ENCODE measurements at regions of chr2 and their contacts with region 1.

Region 1: DNA sequence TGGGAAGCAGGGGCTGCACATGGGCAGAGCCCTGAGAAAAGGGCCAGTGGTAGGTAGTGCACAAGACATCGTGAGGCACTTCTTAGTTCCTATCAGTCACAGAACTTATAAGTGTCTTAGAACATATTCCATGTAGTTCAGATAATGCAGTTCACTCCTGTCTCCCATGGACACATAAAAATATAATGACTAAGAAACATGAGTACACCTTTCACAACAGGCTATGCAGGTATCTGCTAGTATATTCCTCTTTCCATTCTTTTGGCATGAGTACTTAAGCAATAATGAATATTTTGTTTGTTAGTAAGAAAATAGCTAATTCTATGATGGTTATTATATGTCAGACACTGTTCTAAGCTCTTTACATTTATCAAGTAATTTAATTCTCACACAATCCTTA is 808.4 kb downstream of the BCL11A start:
- DNase-seq: no peak
- ATAC-seq: no peak
- H3K4me3 Mint-ChIP-seq: no peak overlapping the region
- H3K27ac Mint-ChIP-seq: no peak overlapping the region
- H3K4me1 Mint-ChIP-seq: no peaks in the 10 kb centered on the region
- H3K27me3 Mint-ChIP-seq: no peaks in the 10 kb centered on the region
- CTCF ChIP-seq: no peak

Region 2: GRCh38 chr2:59726228-59727120 is 18.6 kb before region 1 on chr2:
- CTCF ChIA-PET with region 1: no interaction called
- POLR2A ChIA-PET with region 1: no interaction called
- DNase-seq: no peak
- ATAC-seq: no peak
- H3K4me3 Mint-ChIP-seq: no peak overlapping the region
- H3K27ac Mint-ChIP-seq: no peak overlapping the region
- H3K4me1 Mint-ChIP-seq: peaks cover 6% of the 10 kb centered on the region
- H3K27me3 Mint-ChIP-seq: no peaks in the 10 kb centered on the region
- CTCF ChIP-seq: no peak

Region 3: GRCh38 chr2:60058781-60059180 is 313.7 kb after region 1 on chr2:
- CTCF ChIA-PET with region 1: no interaction called
- POLR2A ChIA-PET with region 1: interaction called, 10 read pairs
- DNase-seq: no peak
- ATAC-seq: no peak
- H3K4me3 Mint-ChIP-seq: no peak overlapping the region
- H3K27ac Mint-ChIP-seq: no peak overlapping the region
- H3K4me1 Mint-ChIP-seq: peaks cover 13% of the 10 kb centered on the region
- H3K27me3 Mint-ChIP-seq: peaks cover 3% of the 10 kb centered on the region; the same call in 1 of the 2 replicates
- CTCF ChIP-seq: no peak

Measured in WTC11 (cell line).